HEK293 (cell line): ENCODE measurements at regions of chr20 and their contacts with region 1.

Region 1: DNA sequence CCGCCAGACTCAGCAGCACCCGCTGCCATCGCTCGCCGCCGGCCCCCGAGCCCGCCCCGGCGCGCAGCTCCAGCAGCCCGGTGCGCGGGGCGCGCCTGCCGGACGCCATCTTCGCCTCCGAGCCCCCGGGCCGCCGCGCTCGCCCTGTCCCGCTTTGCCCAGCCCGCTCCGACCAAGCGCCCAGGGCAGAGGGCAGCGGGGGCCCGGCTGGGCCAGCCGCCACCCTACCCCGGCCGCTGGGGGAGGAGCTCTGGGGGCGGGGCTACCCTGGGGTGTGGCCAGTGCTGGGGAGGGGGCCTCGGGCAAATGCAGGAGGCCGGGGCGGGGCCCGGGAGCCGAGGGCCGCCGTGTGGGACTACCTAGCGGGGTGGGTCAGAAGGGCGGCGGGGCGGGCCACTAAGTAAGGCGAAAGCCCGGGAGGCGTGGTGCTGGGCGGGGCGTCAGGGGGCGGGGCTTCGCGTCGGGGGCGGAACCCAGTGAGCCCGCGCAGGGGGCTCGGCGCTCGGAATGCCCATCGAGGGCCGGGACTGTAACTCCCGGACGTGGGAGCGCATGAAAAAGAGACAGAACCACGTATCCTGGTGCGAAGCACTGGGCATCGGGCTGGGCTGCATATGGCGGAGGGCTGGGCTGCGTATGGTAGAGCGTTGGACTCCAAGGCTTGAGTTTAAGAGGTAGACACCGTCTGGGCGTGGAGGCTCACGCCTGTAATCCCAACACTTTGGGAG is at the start of gene SNTA1:
- H3K4me3 ChIP-seq: peak within 1 kb of the TSS; percentile 56
- H3K27ac ChIP-seq: peak within 1 kb of the TSS; percentile 66; the same call in 1 of the 2 replicates
- H3K4me1 ChIP-seq: no peaks in the 10 kb centered on the region; the same call in 1 of the 2 replicates
- CTCF ChIP-seq: no peak

Region 2: GRCh38 chr20:33299111-33299603 is 144.5 kb before region 1 on chr20:
- CTCF ChIA-PET with region 1: no interaction called
- POLR2A ChIA-PET with region 1: no interaction called
- H3K4me3 ChIP-seq: no peak overlapping the region
- H3K27ac ChIP-seq: no peak overlapping the region
- H3K4me1 ChIP-seq: no peaks in the 10 kb centered on the region
- CTCF ChIP-seq: peak; percentile 88

Region 3: DNA sequence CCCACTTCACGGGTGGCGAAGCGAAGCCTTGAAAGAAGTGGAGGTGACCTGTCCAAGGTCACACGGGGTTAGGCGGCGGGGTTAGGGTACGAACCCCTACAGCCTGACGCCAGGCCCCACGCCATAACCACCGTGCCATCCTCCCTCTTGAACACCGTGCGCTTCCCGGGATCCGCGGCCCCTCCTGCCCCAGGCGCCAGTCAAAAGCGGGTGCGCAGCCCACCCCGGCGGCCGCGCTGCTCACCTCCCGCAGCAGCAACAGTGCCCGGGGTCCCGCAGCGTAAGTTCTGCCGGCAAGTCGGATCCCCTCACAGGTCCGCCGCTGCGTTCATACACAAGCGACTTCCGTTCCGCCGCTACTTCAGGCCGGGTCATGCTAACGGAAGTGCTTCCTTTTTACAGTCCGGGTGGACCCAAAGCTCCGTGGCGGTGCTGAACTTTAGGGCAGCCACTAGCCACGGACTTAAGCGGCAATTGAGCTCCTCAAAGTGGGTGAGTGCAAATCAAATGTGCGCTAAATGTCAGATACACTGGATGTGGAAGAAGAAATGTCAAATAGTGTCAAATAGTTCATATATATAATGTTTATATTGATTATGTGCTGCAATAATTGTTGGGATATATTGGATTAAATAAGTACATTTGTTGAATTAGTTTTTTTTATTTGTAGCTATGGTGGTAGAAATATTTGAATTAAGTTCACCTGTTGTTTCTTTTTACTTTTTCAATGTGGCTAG is 42.3 kb before region 1 on chr20 and contains the start of gene CDK5RAP1:
- CTCF ChIA-PET with region 1: no interaction called
- POLR2A ChIA-PET with region 1: interaction called, 10 read pairs
- H3K4me3 ChIP-seq: peak within 1 kb of the TSS; percentile 75
- H3K27ac ChIP-seq: peak within 1 kb of the TSS; percentile 28; the same call in 1 of the 2 replicates
- H3K4me1 ChIP-seq: peaks cover 8% of the 10 kb centered on the region
- CTCF ChIP-seq: peak; percentile 40; the same call in 1 of the 2 replicates